ENCODE measurements at regions of chr5 and their contacts with region 1.

Region 1: GRCh38 chr5:141430332-141431113 is at the start of gene PCDHGA12:
- DNase-seq: peak; percentile 63
- ATAC-seq: peak; percentile 86 to 94
- total RNA-seq, gene PCDHGA12: 4.5 to 6.5 TPM

Region 2: GRCh38 chr5:141320225-141321169 is 110.0 kb before region 1 on chr5 and contains the start of gene TAF7:
- intact Hi-C with region 1: no loop called
- DNase-seq: peak; percentile 92
- ATAC-seq: peak; percentile 100
- total RNA-seq, gene TAF7: 86.3 to 93.5 TPM

Region 3: GRCh38 chr5:141512390-141512910 is 81.9 kb after region 1 on chr5:
- intact Hi-C with region 1: loop called in 1 of 2 experiments (anchors 2 kb)
- DNase-seq: peak; percentile 85
- ATAC-seq: peak; percentile 12 to 16

Measured in left cardiac atrium (tissue), 4 donors.